ENCODE measurements at regions of chr5 and their contacts with region 1.

Region 1: DNA sequence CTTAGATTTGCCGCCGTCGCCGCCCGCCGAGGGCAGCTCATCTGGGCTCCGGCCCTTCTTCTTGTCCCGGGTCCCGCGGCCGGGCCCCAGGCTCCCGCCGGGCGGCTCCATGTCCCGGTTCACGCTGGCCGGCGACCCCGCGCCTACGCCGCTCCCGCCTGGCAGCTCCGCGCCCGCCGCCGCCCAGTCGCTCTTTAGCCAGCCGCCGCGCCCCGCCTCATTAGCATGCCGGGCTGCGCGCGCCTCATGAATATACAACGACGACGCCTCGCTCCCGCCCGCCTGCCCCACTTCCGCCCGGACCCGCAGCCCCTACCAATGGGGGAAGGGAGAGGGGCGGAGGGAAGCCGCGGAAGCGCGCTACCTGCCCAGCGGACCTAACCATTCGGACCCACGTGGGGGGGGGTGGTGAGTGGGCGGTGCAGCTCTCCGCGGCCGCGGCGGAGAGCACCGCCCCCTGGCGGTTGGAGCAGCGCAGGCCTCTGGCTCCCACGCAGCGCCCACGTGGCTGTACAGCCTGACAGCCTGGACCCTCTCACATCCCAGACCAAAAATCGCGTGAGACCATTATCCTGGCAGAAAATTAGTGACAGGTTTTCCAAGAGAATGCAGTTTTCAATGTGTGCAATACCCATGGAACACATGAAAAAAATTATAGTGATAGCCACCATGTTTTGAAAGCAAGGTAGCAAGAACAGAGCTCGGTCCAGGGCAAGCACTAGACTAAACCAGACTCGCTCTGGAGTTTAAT is at the start of gene DIAPH1:
- DNase-seq: peak; percentile 95 to 99 (median 98)
- ATAC-seq: peak; percentile 90
- H3K4me3 ChIP-seq: peak within 1 kb of the TSS; percentile 96
- H3K4me3 Mint-ChIP-seq: peak within 1 kb of the TSS; percentile 98
- H3K27ac ChIP-seq: peak within 1 kb of the TSS; percentile 91 to 94
- H3K27ac Mint-ChIP-seq: peak within 1 kb of the TSS; percentile 92
- H3K4me1 ChIP-seq: peaks cover 25% of the 10 kb centered on the region
- H3K4me1 Mint-ChIP-seq: peaks cover 66% of the 10 kb centered on the region
- H3K27me3 ChIP-seq: no peaks in the 10 kb centered on the region
- H3K27me3 Mint-ChIP-seq: no peaks in the 10 kb centered on the region
- CTCF ChIP-seq: peak; percentile 86
- total RNA-seq, gene DIAPH1: 159 to 161 TPM

Region 2: GRCh38 chr5:140916349-140916748 is 702.6 kb before region 1 on chr5:
- CTCF ChIA-PET with region 1: no interaction called
- POLR2A ChIA-PET with region 1: no interaction called
- intact Hi-C with region 1: no loop called
- DNase-seq: no peak
- ATAC-seq: no peak
- H3K4me3 ChIP-seq: no peak overlapping the region
- H3K4me3 Mint-ChIP-seq: no peak overlapping the region
- H3K27ac ChIP-seq: no peak overlapping the region
- H3K27ac Mint-ChIP-seq: no peak overlapping the region
- H3K4me1 ChIP-seq: no peaks in the 10 kb centered on the region
- H3K4me1 Mint-ChIP-seq: no peaks in the 10 kb centered on the region
- H3K27me3 ChIP-seq: no peaks in the 10 kb centered on the region
- H3K27me3 Mint-ChIP-seq: peaks cover 29% of the 10 kb centered on the region
- CTCF ChIP-seq: no peak

Region 3: GRCh38 chr5:141570655-141571054 is 48.3 kb before region 1 on chr5:
- CTCF ChIA-PET with region 1: interaction called, 13 read pairs
- POLR2A ChIA-PET with region 1: interaction called, 3 read pairs
- intact Hi-C with region 1: no loop called
- DNase-seq: no peak
- ATAC-seq: no peak
- H3K4me3 ChIP-seq: no peak overlapping the region
- H3K4me3 Mint-ChIP-seq: no peak overlapping the region
- H3K27ac ChIP-seq: peak overlapping the region in 1 of 2 donors; percentile 17
- H3K27ac Mint-ChIP-seq: no peak overlapping the region
- H3K4me1 ChIP-seq: no peaks in the 10 kb centered on the region
- H3K4me1 Mint-ChIP-seq: peaks cover 9% of the 10 kb centered on the region
- H3K27me3 ChIP-seq: no peaks in the 10 kb centered on the region
- H3K27me3 Mint-ChIP-seq: no peaks in the 10 kb centered on the region
- CTCF ChIP-seq: no peak

Region 4: GRCh38 chr5:141590127-141590526 is 28.9 kb before region 1 on chr5:
- CTCF ChIA-PET with region 1: interaction called, 281 read pairs
- POLR2A ChIA-PET with region 1: interaction called, 191 read pairs
- intact Hi-C with region 1: loop called (anchors 1 kb)
- DNase-seq: peak in 1 of 14 experiments; percentile 24
- ATAC-seq: no peak
- H3K4me3 ChIP-seq: no peak overlapping the region
- H3K4me3 Mint-ChIP-seq: no peak overlapping the region
- H3K27ac ChIP-seq: no peak overlapping the region
- H3K27ac Mint-ChIP-seq: no peak overlapping the region
- H3K4me1 ChIP-seq: peaks cover 21% of the 10 kb centered on the region
- H3K4me1 Mint-ChIP-seq: peaks cover 73% of the 10 kb centered on the region
- H3K27me3 ChIP-seq: no peaks in the 10 kb centered on the region
- H3K27me3 Mint-ChIP-seq: no peaks in the 10 kb centered on the region
- CTCF ChIP-seq: no peak

Region 5: GRCh38 chr5:141598391-141599350 is 20.3 kb before region 1 on chr5:
- CTCF ChIA-PET with region 1: interaction called, 281 read pairs
- POLR2A ChIA-PET with region 1: interaction called, 191 read pairs
- intact Hi-C with region 1: loop called in 1 of 2 experiments (anchors 2 kb)
- DNase-seq: peak in 1 of 14 experiments; percentile 52
- ATAC-seq: peak; percentile 62
- H3K4me3 ChIP-seq: no peak overlapping the region
- H3K4me3 Mint-ChIP-seq: peak overlapping the region; percentile 35
- H3K27ac ChIP-seq: peak overlapping the region in 1 of 2 donors; percentile 75
- H3K27ac Mint-ChIP-seq: peak overlapping the region; percentile 91
- H3K4me1 ChIP-seq: peaks cover 70% of the 10 kb centered on the region
- H3K4me1 Mint-ChIP-seq: peaks cover 80% of the 10 kb centered on the region
- H3K27me3 ChIP-seq: no peaks in the 10 kb centered on the region
- H3K27me3 Mint-ChIP-seq: no peaks in the 10 kb centered on the region
- CTCF ChIP-seq: no peak

Region 6: GRCh38 chr5:141605523-141606277 is 13.3 kb before region 1 on chr5:
- CTCF ChIA-PET with region 1: interaction called, 79 read pairs
- POLR2A ChIA-PET with region 1: interaction called, 153 read pairs
- intact Hi-C with region 1: loop called (anchors 1 kb)
- DNase-seq: peak; percentile 43 to 95 (median 64)
- ATAC-seq: peak; percentile 92
- H3K4me3 ChIP-seq: peak overlapping the region; percentile 14
- H3K4me3 Mint-ChIP-seq: peak overlapping the region; percentile 73
- H3K27ac ChIP-seq: peak overlapping the region; percentile 75 to 84
- H3K27ac Mint-ChIP-seq: peak overlapping the region; percentile 91
- H3K4me1 ChIP-seq: peaks cover 71% of the 10 kb centered on the region
- H3K4me1 Mint-ChIP-seq: peaks cover 85% of the 10 kb centered on the region
- H3K27me3 ChIP-seq: no peaks in the 10 kb centered on the region
- H3K27me3 Mint-ChIP-seq: no peaks in the 10 kb centered on the region
- CTCF ChIP-seq: no peak

Region 7: GRCh38 chr5:141650851-141651727 is 32.1 kb after region 1 on chr5 and contains the start of gene FCHSD1:
- CTCF ChIA-PET with region 1: interaction called, 4 read pairs
- POLR2A ChIA-PET with region 1: interaction called, 12 read pairs
- intact Hi-C with region 1: no loop called
- DNase-seq: peak; percentile 62 to 88 (median 76)
- ATAC-seq: peak; percentile 91
- H3K4me3 ChIP-seq: peak within 1 kb of the TSS; percentile 86
- H3K4me3 Mint-ChIP-seq: peak within 1 kb of the TSS; percentile 86
- H3K27ac ChIP-seq: peak within 1 kb of the TSS; percentile 26 to 83
- H3K27ac Mint-ChIP-seq: peak within 1 kb of the TSS; percentile 54
- H3K4me1 ChIP-seq: peaks cover 28% of the 10 kb centered on the region
- H3K4me1 Mint-ChIP-seq: peaks cover 38% of the 10 kb centered on the region
- H3K27me3 ChIP-seq: no peaks in the 10 kb centered on the region
- H3K27me3 Mint-ChIP-seq: peaks cover 3% of the 10 kb centered on the region
- CTCF ChIP-seq: no peak
- total RNA-seq, gene FCHSD1: 79.8 to 86.8 TPM